ENCODE measurements at regions of chr14 and their contacts with region 1.

Region 1: DNA sequence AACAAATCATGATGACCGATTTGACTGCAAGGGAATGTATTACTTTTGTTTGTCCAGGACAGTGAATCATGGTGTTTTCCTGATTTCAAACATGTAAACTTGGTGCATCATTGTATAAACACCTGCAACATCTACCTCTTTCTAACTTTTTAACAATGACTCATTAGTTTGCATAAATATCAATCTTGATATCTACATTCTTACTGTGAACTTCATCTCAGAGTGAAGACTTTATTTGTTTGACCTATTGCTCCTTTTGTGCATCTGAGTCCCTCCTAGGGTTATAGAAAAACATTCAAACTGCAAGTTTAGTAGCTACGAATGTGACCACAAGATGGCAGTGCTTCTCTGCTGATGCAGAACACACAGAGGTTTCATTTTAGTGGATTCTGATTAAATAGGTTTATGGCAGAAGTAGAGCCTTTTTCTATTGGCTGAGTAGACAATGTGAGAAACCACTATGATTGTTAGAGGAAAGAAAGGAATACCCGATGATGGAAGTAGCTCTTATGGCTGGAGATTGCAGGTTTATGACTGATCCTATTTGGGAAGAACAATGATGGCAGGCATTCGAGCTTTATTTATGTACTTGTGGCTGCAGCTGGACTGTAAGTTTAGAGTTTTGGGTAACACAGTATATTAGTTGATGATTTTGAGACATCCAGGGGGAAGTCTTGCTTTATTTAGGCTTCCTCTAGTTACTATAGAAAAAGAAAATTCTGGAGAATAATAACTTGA is 244.2 kb upstream of the OR4E1 start:
- DNase-seq: no peak
- H3K4me3 ChIP-seq: no peak overlapping the region
- H3K27ac ChIP-seq: no peak overlapping the region
- H3K4me1 ChIP-seq: no peaks in the 10 kb centered on the region
- H3K27me3 ChIP-seq: no peaks in the 10 kb centered on the region
- CTCF ChIP-seq: peak in 2 of 3 experiments; percentile 75; a peak in 3 of 4 replicates
- EP300 ChIP-seq: no peak
- POLR2A ChIP-seq: no peak
- RAD21 ChIP-seq: peak; percentile 75

Region 2: GRCh38 chr14:21437063-21437901 is 480.6 kb before region 1 on chr14:
- CTCF ChIA-PET with region 1: no interaction called
- POLR2A ChIA-PET with region 1: no interaction called
- DNase-seq: peak; percentile 95 to 100
- H3K4me3 ChIP-seq: peak overlapping the region; percentile 48 to 76 (median 67)
- H3K27ac ChIP-seq: peak overlapping the region; percentile 73
- H3K4me1 ChIP-seq: peaks cover 0 to 5% (median 1%) of the 10 kb centered on the region in 4 experiments; a peak in 4 of 7 replicates
- H3K27me3 ChIP-seq: no peaks in the 10 kb centered on the region
- CTCF ChIP-seq: no peak
- EP300 ChIP-seq: 0 out of 3 replicates have a peak, but pooled peaks of 1 of the 2 experiments have one; percentile 10
- POLR2A ChIP-seq: peak; percentile 54 to 79
- RAD21 ChIP-seq: no peak; a peak in 1 of 4 replicates

Region 3: GRCh38 chr14:21852061-21852664 is 65.7 kb before region 1 on chr14:
- CTCF ChIA-PET with region 1: interaction called, 17 read pairs
- POLR2A ChIA-PET with region 1: no interaction called
- DNase-seq: peak; percentile 27 to 88
- H3K4me3 ChIP-seq: no peak overlapping the region
- H3K27ac ChIP-seq: no peak overlapping the region
- H3K4me1 ChIP-seq: no peaks in the 10 kb centered on the region
- H3K27me3 ChIP-seq: no peaks in the 10 kb centered on the region
- CTCF ChIP-seq: peak; percentile 65 to 92 (median 67)
- EP300 ChIP-seq: no peak
- POLR2A ChIP-seq: no peak
- RAD21 ChIP-seq: peak in 1 of 2 experiments; percentile 35; a peak in 1 of 4 replicates

Region 4: GRCh38 chr14:21860172-21860571 is 57.7 kb before region 1 on chr14:
- CTCF ChIA-PET with region 1: interaction called, 11 read pairs
- POLR2A ChIA-PET with region 1: no interaction called
- DNase-seq: peak in 1 of 2 experiments; percentile 67
- H3K4me3 ChIP-seq: no peak overlapping the region
- H3K27ac ChIP-seq: no peak overlapping the region
- H3K4me1 ChIP-seq: no peaks in the 10 kb centered on the region
- H3K27me3 ChIP-seq: no peaks in the 10 kb centered on the region
- CTCF ChIP-seq: peak in 2 of 3 experiments; percentile 56 to 66; a peak in 3 of 4 replicates
- EP300 ChIP-seq: no peak
- POLR2A ChIP-seq: no peak
- RAD21 ChIP-seq: peak; percentile 33 to 50; a peak in 3 of 4 replicates

Region 5: DNA sequence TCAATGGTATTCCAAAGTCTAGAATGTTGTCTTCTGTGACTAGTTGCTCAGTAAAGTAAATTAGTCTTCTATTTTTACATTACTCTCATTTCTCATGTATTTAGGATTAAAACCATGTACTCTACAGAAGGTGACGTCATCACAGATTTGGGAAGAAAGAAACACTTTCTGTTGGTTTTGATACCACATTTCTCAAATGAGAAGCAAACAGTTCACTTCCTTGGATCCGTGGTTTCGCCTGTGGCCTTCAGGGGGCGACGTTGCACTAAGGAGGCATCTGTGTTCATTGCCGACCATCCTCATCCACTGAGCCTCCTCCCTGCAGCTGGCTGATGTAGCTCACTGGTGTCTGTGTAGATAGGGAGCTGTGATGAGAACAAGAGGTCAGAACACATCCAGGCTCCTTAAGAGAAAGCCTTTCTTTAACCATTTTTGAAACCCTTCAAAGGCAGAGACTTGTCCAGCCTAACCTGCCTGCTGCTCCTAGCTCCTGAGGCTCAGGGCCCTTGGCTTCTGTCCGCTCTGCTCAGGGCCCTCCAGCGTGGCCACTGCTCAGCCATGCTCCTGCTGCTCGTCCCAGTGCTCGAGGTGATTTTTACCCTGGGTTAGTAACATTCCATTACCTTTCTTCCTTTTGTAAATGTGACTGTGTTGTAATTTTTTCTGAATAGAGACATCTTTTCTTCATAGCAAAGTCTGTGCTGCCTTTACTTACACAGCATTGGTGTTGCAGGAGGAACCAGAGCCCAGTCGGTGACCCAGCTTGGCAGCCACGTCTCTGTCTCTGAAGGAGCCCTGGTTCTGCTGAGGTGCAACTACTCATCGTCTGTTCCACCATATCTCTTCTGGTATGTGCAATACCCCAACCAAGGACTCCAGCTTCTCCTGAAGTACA is 23.6 kb before region 1 on chr14:
- CTCF ChIA-PET with region 1: interaction called, 11 read pairs
- POLR2A ChIA-PET with region 1: no interaction called
- DNase-seq: peak in 1 of 2 experiments; percentile 66
- H3K4me3 ChIP-seq: no peak overlapping the region
- H3K27ac ChIP-seq: no peak overlapping the region
- H3K4me1 ChIP-seq: no peaks in the 10 kb centered on the region
- H3K27me3 ChIP-seq: no peaks in the 10 kb centered on the region
- CTCF ChIP-seq: peak; percentile 53 to 77 (median 69)
- EP300 ChIP-seq: no peak
- POLR2A ChIP-seq: no peak
- RAD21 ChIP-seq: peak; percentile 51 to 57

Region 6: GRCh38 chr14:21902650-21903103 is 15.2 kb before region 1 on chr14:
- CTCF ChIA-PET with region 1: interaction called, 39 read pairs
- POLR2A ChIA-PET with region 1: no interaction called
- DNase-seq: peak in 1 of 2 experiments; percentile 56
- H3K4me3 ChIP-seq: no peak overlapping the region
- H3K27ac ChIP-seq: no peak overlapping the region
- H3K4me1 ChIP-seq: no peaks in the 10 kb centered on the region
- H3K27me3 ChIP-seq: no peaks in the 10 kb centered on the region
- CTCF ChIP-seq: peak in 2 of 3 experiments; percentile 18 to 49; a peak in 2 of 4 replicates
- EP300 ChIP-seq: no peak
- POLR2A ChIP-seq: no peak
- RAD21 ChIP-seq: no peak

Region 7: GRCh38 chr14:21940887-21941856 is 23.3 kb after region 1 on chr14:
- CTCF ChIA-PET with region 1: interaction called, 21 read pairs
- POLR2A ChIA-PET with region 1: no interaction called
- DNase-seq: no peak
- H3K4me3 ChIP-seq: no peak overlapping the region
- H3K27ac ChIP-seq: no peak overlapping the region
- H3K4me1 ChIP-seq: no peaks in the 10 kb centered on the region
- H3K27me3 ChIP-seq: no peaks in the 10 kb centered on the region
- CTCF ChIP-seq: peak; percentile 18 to 85 (median 57)
- EP300 ChIP-seq: no peak
- POLR2A ChIP-seq: no peak
- RAD21 ChIP-seq: peak; percentile 53 to 59

Region 8: DNA sequence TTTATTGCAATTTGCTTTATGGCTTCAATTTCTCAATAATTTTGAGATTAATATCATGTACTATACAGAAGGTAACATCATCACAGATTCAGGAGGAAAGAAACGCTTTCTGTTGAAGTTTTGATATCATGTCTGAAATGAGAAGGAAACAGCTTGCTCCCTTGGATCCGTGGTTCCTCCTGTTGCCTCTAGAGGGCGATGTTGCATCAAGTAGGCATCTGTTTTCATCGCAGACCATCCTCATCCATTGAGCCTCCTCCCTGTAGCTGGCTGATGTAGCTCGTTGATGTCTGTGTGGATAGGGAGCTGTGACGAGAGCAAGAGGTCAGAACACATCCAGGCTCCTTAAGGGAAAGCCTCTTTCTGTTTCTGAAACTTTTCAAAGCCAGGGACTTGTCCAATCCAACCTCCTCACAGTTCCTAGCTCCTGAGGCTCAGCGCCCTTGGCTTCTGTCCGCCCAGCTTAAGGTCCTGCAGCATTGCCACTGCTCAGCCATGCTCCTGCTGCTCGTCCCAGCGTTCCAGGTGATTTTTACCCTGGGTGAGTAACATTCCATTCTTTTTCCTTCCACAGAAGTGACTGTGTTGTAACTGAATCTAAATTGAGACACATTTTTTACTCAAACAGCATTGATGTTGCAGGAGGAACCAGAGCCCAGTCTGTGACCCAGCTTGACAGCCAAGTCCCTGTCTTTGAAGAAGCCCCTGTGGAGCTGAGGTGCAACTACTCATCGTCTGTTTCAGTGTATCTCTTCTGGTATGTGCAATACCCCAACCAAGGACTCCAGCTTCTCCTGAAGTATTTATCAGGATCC is 60.5 kb after region 1 on chr14:
- CTCF ChIA-PET with region 1: interaction called, 10 read pairs
- POLR2A ChIA-PET with region 1: no interaction called
- DNase-seq: peak in 1 of 2 experiments; percentile 84
- H3K4me3 ChIP-seq: no peak overlapping the region
- H3K27ac ChIP-seq: no peak overlapping the region
- H3K4me1 ChIP-seq: no peaks in the 10 kb centered on the region
- H3K27me3 ChIP-seq: peaks cover 0 to 1% (median 0%) of the 10 kb centered on the region in 4 experiments; a peak in 1 of 7 replicates
- CTCF ChIP-seq: peak; percentile 81 to 93 (median 89)
- EP300 ChIP-seq: no peak
- POLR2A ChIP-seq: no peak
- RAD21 ChIP-seq: peak; percentile 61 to 65

Measured in H1 (cell line).